ENCODE measurements at regions of chr10 and their contacts with region 1.

Region 1: DNA sequence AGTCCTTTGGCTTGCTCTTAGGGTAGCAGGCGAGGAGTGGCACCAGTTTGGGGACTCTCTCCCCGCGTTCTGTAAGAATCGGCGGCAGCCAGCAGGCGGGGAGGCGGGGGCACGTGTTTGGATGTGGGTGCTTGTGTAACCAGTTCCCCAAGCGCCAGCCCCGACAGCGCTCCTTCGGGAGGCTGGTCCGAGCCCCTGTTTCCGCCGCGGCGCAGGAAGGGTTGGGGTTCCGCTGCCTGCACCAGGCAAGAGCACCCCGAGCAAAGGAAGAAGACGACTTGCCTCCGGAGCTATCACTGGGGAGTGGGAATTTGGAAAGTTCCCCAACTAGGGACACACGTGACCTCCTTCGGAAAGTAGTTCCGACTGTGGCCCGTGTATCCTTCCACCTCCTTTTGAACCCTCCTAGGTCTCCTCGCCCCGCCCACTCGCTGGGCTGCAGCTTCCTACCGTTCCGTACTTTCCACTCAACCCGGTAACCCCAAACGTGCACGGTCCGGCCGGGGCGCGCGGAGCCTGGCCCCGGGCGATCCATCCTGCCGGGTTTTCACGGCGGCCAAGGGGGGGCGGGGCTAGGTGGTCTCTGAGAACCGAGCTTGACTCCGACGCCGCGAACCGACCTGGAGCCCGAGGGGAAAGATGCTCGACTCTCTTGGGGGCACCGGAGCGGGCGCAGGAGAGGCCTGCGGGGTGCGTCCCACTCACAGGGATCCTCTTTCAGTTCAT is 1.2 kb downstream of the KLLN start:
- DNase-seq: peak; percentile 85 to 93 (median 92)
- H3K4me3 ChIP-seq: peak overlapping the region; percentile 69 to 98 (median 87)
- H3K27ac ChIP-seq: peak overlapping the region; percentile 80 to 100 (median 98)
- H3K27me3 ChIP-seq: no peaks in the 10 kb centered on the region
- CTCF ChIP-seq: peak in 20 of 56 donors; percentile 2 to 41 (median 18)

Region 2: DNA sequence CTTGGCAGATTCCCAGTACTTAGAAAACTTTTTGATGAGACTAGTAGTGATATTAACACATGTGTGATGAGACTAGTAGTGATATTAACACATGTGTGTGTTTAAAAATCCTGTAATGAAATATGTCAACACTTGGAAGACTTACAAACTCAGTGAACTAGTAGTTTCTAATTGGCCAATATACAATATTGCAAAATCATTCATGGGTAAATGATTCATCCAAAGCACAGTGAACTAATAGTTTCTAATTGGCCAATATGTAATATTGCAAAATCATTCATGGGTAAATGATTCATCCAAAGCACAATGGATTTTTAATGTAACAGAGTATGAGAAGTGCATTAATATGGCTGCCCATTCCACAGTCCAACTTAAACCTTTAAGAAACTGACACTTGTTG is 121.9 kb before region 1 on chr10:
- intact Hi-C with region 1: no loop called
- DNase-seq: no peak
- H3K4me3 ChIP-seq: no peak overlapping the region
- H3K27ac ChIP-seq: no peak overlapping the region
- H3K27me3 ChIP-seq: peaks cover 0 to 4% (median 0%) of the 10 kb centered on the region in 45 donors
- CTCF ChIP-seq: no peak

Region 3: DNA sequence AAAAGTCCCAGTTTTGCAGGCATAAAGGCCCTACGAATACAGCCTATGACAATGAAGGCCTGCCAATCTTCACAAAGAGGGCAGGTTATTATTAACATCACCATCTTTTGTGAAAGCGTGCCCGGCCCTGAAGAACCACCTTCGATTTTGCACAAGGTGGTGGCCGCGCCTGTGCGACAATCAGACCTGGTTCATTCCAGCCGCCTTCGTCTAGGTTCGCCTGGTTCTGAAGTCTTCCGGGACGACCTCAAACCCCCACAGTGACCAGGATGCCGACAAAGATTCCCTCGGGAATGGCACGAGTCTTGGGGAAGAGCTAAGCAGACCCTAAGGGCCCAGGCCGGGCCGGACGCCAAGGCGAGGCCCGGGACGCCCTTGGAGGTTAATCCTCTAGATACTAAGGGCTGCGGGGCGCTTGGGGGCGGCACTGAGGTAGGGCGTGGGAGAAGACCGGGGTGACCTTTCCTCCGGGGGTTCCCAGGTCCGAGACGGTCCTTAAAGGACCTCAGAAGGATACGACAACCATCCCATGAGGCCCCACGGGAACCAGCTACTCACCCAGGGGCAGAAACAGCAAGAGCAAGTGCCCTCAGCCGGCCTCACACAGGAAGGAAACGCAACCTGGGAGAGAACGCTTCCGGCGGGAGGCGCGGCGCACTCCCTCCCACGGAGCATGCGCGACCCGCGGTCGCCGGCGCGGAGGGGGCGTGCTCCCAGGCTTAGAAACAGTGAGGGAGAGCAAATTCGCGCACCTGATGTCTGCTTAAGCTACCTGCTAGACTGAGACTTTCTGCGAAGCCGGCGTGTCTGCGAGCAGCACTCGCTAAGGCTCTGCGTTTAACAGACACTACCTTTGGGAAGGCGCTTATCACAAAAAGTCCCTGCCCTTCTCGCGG is 44.3 kb before region 1 on chr10 and contains the start of gene ATAD1:
- intact Hi-C with region 1: loop called (anchors 1 to 2 kb)
- DNase-seq: peak; percentile 66 to 92 (median 82)
- H3K4me3 ChIP-seq: peak within 1 kb of the TSS; percentile 64 to 96 (median 84)
- H3K27ac ChIP-seq: peak within 1 kb of the TSS in 58 of 59 donors; percentile 4 to 95 (median 80)
- H3K27me3 ChIP-seq: no peaks in the 10 kb centered on the region
- CTCF ChIP-seq: peak in 44 of 56 donors; percentile 8 to 68 (median 43)
- total RNA-seq, gene ATAD1: 36.0 to 101 (median 69.0) TPM

Region 4: DNA sequence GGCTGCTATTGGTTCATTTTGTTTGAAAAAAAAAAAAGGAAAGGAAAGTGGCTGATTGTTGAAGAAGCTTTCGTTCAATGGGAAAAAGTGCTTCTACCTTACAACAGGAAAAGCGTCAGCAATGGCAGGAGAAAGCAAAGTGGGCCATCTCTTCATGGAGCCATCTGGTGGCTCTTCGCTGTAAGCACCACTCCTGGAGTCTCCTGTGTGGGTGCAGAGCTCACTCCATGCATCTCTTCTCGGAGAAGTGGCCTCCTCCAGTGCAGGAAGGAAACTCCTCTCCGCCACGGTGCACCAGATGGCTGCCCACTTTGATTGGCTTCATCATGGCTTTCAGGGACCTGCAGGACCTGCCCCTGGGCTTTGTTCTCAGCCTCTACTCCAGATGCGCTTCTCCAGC is 252.3 kb after region 1 on chr10:
- intact Hi-C with region 1: loop called in 1 of 2 experiments (anchors 5 kb)
- DNase-seq: peak in 2 of 10 donors; percentile 7 to 10
- H3K4me3 ChIP-seq: no peak overlapping the region
- H3K27ac ChIP-seq: no peak overlapping the region
- H3K27me3 ChIP-seq: peaks cover 0 to 3% (median 0%) of the 10 kb centered on the region in 45 donors
- CTCF ChIP-seq: peak in 49 of 56 donors; percentile 20 to 63 (median 40)

Region 5: GRCh38 chr10:88386821-88387773 is 525.0 kb after region 1 on chr10:
- intact Hi-C with region 1: loop called (anchors 5 kb)
- DNase-seq: peak in 4 of 10 donors; percentile 28 to 75 (median 46)
- H3K4me3 ChIP-seq: peak overlapping the region in 55 of 59 donors; percentile 5 to 57 (median 32)
- H3K27ac ChIP-seq: peak overlapping the region in 53 of 59 donors; percentile 4 to 89 (median 65)
- H3K27me3 ChIP-seq: no peaks in the 10 kb centered on the region
- CTCF ChIP-seq: peak in 2 of 56 donors; percentile 8

Region 6: DNA sequence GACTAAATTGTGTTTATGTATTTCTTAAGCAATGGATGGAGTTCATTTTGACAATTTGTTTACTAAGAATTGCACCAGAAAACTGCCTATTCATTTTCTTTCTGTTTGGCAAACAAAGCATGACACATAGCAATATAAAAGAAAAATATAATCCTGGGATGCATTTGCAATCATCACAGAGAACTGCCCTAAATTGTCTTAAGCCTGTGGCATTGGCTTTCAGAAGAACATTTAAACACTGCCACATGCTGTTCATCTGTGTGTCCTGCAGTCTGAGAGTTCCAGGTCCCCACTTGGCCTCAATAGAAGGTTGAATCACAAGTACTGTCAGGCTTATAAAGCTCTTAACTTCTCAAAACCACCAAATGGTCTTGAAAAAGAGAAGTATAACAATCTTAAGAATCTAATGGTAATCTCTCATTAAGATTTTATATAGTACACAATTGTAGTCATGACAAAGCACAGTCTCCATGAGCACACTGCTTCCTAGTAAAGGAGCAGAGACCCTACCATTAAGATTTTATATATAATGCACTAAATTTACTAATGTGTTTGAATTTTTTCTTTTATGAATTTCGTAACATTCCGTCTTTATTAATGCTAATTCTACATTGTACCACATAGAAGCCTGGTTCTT is 691.1 kb after region 1 on chr10:
- intact Hi-C with region 1: loop called in 1 of 2 experiments (anchors 10 kb)
- DNase-seq: peak in 6 of 10 donors; percentile 6 to 63 (median 36)
- H3K4me3 ChIP-seq: no peak overlapping the region
- H3K27ac ChIP-seq: no peak overlapping the region
- H3K27me3 ChIP-seq: no peaks in the 10 kb centered on the region
- CTCF ChIP-seq: peak; percentile 51 to 89 (median 76)

Region 7: GRCh38 chr10:88582806-88583583 is 720.9 kb after region 1 on chr10 and contains the start of gene RNLS:
- intact Hi-C with region 1: loop called in 1 of 2 experiments (anchors 10 kb)
- DNase-seq: peak; percentile 63 to 87 (median 77)
- H3K4me3 ChIP-seq: peak within 1 kb of the TSS; percentile 59 to 93 (median 82)
- H3K27ac ChIP-seq: peak within 1 kb of the TSS; percentile 79 to 99 (median 96)
- H3K27me3 ChIP-seq: no peaks in the 10 kb centered on the region
- CTCF ChIP-seq: peak; percentile 68 to 93 (median 83)
- total RNA-seq, gene RNLS: 4.9 to 23.1 (median 13.3) TPM